ENCODE measurements at regions of chr4 and their contacts with region 1.

Region 1: DNA sequence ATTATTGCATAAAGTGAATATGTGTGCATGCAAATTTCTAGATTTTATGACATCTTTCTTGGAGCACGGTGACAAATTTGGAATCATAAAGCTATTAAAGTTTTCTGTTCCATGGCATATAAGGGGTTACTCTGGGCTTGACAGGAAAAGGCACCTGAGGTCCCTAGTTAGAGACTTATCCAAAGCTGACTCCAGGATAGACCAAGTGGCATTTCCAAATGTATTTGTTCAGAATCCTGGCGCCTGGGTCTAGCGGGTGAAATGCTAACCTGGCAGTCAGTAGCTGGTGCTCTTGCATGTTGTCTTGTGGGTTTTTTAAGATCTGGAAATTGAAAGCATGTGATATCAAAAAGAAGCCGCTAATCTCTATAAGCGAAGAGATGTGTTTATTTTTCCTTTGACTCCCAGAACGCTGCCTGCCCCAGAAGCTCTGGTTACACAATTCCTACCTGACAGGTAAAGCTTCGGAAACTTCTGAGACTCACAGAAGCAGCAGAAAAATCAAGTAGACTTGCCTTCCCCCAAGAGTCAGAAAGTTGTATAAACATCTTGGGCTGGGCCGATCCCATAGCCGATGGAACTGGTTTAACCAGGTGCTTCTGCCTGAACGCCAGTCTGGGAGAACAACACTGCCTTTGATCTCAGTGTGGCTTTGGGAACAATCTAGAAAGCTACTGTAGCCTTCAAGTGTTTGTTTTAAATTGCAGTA is 12.9 kb upstream of the ZCCHC4 start:
- DNase-seq: no peak
- H3K4me3 ChIP-seq: no peak overlapping the region
- H3K27ac ChIP-seq: no peak overlapping the region
- H3K4me1 ChIP-seq: no peaks in the 10 kb centered on the region
- H3K27me3 ChIP-seq: no peaks in the 10 kb centered on the region
- CTCF ChIP-seq: no peak
- POLR2A ChIP-seq: no peak

Region 2: GRCh38 chr4:25253071-25253445 is 46.6 kb before region 1 on chr4:
- intact Hi-C with region 1: loop called (anchors 10 kb)
- DNase-seq: no peak
- H3K4me3 ChIP-seq: no peak overlapping the region
- H3K27ac ChIP-seq: peak overlapping the region in 3 of 8 donors; percentile 28 to 55 (median 32)
- H3K4me1 ChIP-seq: peaks cover 0 to 19% (median 11%) of the 10 kb centered on the region in 6 donors
- H3K27me3 ChIP-seq: no peaks in the 10 kb centered on the region
- CTCF ChIP-seq: no peak
- POLR2A ChIP-seq: no peak

Measured in spleen (tissue), 13 donors.